WTC11 (cell line): ENCODE measurements at regions of chr17 and their contacts with region 1.

Region 1: DNA sequence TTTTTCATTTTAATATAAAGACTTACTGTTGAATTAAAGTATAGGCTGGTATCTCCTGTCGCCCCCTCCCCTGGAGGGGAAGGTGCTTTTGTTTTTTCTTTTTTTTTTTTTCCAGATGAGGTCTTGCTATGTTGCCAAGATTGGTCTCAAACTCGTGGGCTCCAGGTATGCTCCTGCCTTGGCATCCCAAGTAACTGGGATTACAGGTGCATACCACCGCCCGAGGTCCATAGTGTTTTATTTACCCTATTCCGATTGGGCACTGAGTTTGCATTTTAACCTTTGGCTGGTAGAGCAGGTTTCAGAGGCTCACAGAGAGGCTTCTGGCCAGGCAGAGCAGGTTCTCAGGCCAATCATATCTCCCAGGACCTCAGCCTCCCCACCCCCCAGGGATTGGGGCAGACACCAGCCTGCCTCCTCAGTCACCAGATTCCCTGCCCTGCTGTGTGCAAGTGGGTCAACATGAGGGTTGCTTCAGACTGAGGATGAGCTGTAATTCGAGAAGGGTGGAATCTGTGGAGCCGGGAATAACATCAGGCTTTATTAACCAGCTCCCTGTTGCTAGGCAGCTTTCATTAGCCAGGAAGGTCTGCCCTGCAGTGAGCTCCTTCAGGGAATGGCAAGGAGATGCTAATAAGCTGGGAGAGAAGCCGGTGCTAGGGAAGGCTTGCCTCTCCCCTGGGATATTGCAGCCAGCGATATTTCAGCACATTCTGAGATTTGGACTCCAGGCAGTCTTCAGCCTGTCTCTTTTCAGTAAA is 10.4 kb downstream of the SGSM2 start:
- DNase-seq: peak; percentile 83
- ATAC-seq: peak; percentile 94
- H3K4me3 Mint-ChIP-seq: peak overlapping the region; percentile 61
- H3K27ac Mint-ChIP-seq: peak overlapping the region; percentile 99
- H3K4me1 Mint-ChIP-seq: peaks cover 32% of the 10 kb centered on the region
- H3K27me3 Mint-ChIP-seq: no peaks in the 10 kb centered on the region
- CTCF ChIP-seq: no peak

Region 2: DNA sequence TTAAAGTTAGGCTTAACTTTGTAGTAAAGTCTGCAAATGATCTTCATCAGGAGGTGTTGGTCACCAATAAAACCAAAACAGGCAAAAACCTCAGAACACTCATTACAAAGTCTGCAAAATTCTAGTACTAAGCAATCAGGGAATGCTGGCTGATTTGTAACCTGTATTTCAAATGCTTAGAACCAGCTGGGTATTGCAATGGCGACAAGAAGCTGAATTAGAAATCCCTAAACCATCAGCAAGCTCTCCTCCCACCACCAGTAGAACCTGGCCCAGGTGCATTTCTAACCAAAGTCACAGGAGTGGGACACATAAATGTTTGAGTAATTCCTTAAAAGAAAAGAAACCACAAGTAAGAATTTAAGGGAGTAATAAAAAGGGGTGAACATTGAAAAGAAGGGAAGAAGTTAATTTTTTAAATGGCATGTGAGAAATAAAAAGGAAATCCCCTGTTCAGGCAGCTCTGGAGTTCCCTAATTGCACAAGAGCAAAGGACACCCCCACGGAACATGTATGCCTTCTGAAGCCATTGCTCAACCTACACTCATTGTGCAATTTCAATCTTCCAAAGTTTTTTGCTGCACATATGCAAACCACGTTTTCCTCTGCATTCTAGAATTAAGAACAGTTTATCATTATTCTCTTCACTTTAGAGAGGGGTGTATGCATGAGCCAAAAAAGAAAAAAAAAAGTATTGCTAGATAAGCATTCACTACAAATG is 189.9 kb before region 1 on chr17:
- CTCF ChIA-PET with region 1: no interaction called
- POLR2A ChIA-PET with region 1: no interaction called
- DNase-seq: no peak
- ATAC-seq: no peak
- H3K4me3 Mint-ChIP-seq: no peak overlapping the region
- H3K27ac Mint-ChIP-seq: 0 out of 2 replicates have a peak overlapping the region, but pooled peaks have one; percentile 43
- H3K4me1 Mint-ChIP-seq: no peaks in the 10 kb centered on the region
- H3K27me3 Mint-ChIP-seq: no peaks in the 10 kb centered on the region
- CTCF ChIP-seq: no peak

Region 3: DNA sequence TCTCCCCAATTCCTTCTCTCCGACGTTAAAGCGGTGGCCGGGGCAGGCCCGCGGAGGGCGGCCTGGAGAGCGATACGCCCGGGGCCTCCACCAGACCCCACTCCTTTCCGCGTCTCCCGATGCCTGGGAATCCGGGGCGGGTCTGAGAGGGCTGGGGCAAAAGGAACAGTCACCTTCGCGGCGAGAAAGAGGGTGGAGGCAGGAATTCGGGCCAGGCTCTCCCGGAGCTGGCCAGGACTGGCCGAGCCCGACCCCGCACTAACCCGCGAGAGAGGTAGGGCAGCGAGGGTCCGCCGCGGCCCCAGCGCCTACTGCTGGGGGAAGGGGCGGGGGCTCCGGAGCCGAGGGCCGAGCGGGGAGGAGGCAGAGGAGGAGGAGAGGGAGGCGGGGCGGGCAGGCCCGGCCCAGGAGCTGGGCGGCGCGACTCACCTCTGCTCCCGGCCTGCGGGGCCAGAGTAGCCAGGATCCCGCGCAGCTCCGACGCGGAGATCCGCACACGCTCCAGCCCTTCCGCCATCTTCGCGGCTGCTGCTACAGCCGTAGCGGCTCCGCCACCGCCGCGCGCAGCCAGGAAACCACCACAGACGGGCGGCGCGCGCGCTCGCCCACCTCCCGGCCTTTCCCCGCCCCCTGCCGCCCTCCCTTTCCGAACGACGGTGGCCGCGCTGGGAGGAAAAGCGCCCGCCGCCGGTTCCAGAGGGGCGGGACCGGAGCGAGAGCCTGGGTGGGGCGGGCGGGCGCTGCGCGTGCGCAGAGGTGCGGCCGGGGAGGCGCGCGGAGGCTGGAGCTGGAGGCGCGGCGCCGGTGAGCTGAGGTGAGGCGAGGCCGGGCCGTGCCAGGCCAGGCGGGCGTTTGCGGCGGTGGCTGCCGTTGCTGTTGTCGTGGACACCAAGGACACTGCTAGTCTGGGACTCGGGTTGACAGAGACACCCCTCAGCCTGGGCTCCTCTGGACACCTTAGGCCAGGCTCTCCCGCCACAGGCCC is 44.2 kb before region 1 on chr17 and contains the starts of genes SMG6 and SRR:
- CTCF ChIA-PET with region 1: interaction called, 13 read pairs
- POLR2A ChIA-PET with region 1: interaction called, 7 read pairs
- DNase-seq: peak; percentile 92
- ATAC-seq: peak; percentile 93
- H3K4me3 Mint-ChIP-seq: peak within 1 kb of the TSS; percentile 86
- H3K27ac Mint-ChIP-seq: peak within 1 kb of the TSS; percentile 74
- H3K4me1 Mint-ChIP-seq: peaks cover 11% of the 10 kb centered on the region
- H3K27me3 Mint-ChIP-seq: peaks cover 4% of the 10 kb centered on the region
- CTCF ChIP-seq: no peak
- total RNA-seq, gene SMG6: 25.6 to 27.2 TPM (median 25.9 TPM) in 3 replicates
- total RNA-seq, gene SRR: 4.6 to 6.9 TPM (median 5.1 TPM) in 3 replicates

Region 4: DNA sequence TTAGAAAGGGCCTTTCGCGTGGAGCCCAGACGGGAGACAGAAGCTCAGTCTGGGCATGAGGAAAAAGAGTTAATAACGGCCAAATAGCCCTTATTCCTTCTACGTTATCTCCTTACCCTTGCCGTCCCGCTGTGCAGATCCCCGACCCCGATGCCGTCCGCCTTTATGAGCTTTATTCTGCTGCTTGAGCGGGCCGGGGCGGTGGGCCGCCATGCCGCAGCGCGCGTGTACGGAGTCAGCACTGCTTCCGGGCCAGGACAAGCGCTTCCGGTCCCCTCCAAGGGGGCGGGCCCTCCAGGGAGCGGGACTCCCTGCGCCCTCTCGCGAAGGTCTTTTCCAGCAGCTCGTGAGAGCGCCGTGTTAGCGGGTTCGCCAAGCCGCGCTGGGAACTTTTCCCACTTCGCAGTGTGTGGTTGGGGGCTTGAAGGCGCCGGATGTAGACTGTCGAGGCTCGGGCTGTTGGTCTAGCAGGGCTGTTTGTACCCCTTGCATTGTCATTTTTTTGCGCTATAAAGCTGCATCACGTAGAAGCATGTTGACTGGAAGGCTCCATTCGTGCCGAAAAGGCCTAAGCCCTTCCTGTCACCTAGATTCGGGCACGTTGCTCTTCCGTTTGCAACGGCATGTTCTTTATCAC is 11.4 kb before region 1 on chr17 and contains the start of gene TSR1:
- CTCF ChIA-PET with region 1: interaction called, 119 read pairs
- POLR2A ChIA-PET with region 1: interaction called, 38 read pairs
- DNase-seq: peak; percentile 90
- ATAC-seq: peak; percentile 81
- H3K4me3 Mint-ChIP-seq: no peak within 1 kb of the TSS; the same call in 1 of the 2 replicates
- H3K27ac Mint-ChIP-seq: peak within 1 kb of the TSS; percentile 99
- H3K4me1 Mint-ChIP-seq: peaks cover 4% of the 10 kb centered on the region
- H3K27me3 Mint-ChIP-seq: no peaks in the 10 kb centered on the region
- CTCF ChIP-seq: no peak
- total RNA-seq, gene TSR1: 59.1 to 74.3 TPM (median 59.7 TPM) in 3 replicates

Region 5: DNA sequence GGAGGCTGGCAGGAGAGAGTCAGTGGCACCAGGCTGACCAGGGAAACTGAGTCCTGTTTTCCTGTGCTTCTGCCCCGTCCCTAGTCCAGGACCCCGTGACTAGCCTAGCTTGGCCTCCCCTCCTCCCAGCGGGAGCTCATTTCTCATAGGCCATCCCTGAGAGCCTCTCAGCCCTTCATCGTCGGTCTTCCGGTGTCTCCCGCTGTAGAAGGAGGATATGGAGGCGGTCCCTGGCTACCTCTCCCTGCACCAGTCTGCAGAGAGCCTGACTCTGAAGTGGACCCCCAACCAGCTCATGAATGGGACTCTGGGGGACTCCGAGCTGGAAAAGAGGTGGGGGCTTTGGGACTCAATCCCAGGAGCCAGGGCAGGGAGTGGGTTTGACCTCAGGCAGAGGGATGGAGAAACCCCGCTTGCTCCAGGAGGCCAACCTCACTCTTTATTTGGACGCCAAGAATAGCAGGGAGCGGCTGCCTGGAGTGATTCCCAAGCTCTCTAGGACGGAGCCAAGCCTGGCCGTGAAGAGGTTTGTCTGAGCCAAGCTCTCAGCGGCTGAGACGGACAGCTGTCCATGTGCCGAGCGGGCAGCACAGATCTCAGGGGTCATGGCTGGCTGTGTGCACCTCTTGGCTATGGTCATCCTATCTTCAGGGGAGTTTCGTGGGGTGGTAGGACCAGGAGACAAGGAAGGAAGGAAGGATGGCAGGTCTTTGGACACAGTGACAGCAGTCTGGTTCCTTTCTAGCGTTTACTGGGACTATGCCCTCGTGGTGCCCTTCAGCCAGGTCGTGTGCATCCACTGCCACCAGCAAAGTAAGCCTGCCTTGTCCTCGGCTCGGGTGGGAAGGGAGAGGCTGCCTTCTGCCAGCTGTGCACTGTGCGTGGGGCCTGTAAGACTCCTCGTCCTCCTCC is 16.4 kb after region 1 on chr17:
- CTCF ChIA-PET with region 1: interaction called, 66 read pairs
- POLR2A ChIA-PET with region 1: interaction called, 5 read pairs
- DNase-seq: no peak
- ATAC-seq: no peak
- H3K4me3 Mint-ChIP-seq: no peak overlapping the region
- H3K27ac Mint-ChIP-seq: peak overlapping the region; percentile 8; the same call in 1 of the 2 replicates
- H3K4me1 Mint-ChIP-seq: peaks cover 3% of the 10 kb centered on the region; the same call in 1 of the 2 replicates
- H3K27me3 Mint-ChIP-seq: no peaks in the 10 kb centered on the region
- CTCF ChIP-seq: no peak

Region 6: DNA sequence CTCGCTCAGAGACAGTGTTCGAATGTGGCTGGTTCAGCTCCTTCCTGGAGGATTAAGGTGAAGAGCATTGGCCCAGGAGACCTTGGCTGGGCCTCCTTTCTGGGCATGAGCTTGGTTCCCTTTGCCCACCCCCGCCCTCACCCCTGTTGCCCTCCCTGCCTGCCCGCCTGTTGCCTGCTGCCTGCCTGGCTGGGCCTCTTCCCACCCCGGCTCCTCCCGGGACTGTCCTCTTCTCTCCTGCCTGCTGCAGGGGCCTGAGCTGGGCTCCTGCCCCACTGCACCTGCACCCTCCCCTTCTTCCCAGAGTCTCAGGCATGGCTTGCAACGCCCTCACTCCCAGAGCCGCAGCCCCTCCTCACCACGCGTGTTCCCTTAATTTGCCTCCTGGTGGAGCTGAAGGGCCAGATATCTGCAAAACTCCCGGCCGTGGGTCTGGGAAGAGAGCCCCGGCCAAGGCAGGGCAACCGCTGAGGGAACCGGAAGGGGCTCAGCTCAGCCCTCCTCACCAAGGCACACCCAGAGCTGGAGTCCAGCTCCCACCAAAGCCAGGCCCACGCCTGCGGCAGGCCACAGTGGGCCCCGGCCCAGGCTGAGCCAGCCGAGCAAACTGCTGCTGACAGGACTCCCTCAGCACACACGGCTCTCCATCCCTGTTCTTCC is 22.0 kb after region 1 on chr17:
- CTCF ChIA-PET with region 1: interaction called, 66 read pairs
- POLR2A ChIA-PET with region 1: interaction called, 5 read pairs
- DNase-seq: peak; percentile 64
- ATAC-seq: peak; percentile 71
- H3K4me3 Mint-ChIP-seq: no peak overlapping the region
- H3K27ac Mint-ChIP-seq: peak overlapping the region; percentile 80
- H3K4me1 Mint-ChIP-seq: peaks cover 12% of the 10 kb centered on the region
- H3K27me3 Mint-ChIP-seq: no peaks in the 10 kb centered on the region
- CTCF ChIP-seq: no peak

Region 7: DNA sequence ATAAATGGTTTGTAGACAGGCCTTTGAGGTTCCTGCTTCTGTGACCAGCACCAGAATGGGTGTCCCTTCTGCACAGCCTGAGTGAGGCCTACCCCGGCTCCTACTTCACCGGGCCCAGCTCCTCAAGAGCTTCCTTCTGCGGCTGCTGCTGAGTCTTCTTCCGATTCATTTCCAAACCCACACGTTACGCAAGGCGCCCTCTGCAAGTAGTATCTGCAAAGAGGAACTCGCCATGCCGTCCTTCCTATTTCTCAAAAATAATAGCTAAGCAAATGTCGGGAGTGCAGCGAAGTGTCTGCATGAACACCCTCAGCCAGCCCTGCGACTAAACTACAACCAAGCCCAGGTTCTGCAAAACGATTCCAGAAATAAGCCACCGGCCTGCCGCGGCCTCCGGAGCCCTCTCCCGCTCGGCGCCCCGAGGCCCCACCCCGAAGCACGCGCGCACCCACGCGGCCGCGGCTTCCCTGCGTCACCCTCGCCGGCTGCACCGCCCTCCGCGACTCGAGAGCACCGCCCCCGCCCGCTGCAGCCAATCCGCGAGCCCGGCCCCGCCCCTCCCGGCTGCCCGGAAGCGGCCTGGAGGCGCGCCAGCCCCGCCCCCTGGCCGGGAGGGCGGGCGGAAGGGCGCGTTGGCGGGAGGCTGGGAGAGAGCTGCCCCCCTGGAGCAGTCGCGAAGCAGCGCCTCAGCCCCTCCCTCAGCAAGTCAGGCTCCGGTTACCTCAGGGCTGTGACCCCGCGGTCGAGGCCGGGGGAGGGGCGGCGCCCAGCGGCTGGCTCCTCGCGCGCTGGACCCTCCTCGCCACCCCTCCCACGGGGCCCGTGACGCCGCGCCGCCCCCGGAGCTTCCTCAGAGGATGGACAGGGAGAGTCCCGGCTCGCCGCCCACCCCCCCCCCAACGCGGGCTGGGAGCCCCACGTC is 44.8 kb after region 1 on chr17:
- CTCF ChIA-PET with region 1: interaction called, 12 read pairs
- POLR2A ChIA-PET with region 1: no interaction called
- DNase-seq: peak; percentile 94
- ATAC-seq: peak; percentile 59
- H3K4me3 Mint-ChIP-seq: peak overlapping the region; percentile 80
- H3K27ac Mint-ChIP-seq: peak overlapping the region; percentile 78
- H3K4me1 Mint-ChIP-seq: peaks cover 42% of the 10 kb centered on the region
- H3K27me3 Mint-ChIP-seq: no peaks in the 10 kb centered on the region
- CTCF ChIP-seq: no peak